ENCODE measurements at regions of chr1 and their contacts with region 1.

Region 1: DNA sequence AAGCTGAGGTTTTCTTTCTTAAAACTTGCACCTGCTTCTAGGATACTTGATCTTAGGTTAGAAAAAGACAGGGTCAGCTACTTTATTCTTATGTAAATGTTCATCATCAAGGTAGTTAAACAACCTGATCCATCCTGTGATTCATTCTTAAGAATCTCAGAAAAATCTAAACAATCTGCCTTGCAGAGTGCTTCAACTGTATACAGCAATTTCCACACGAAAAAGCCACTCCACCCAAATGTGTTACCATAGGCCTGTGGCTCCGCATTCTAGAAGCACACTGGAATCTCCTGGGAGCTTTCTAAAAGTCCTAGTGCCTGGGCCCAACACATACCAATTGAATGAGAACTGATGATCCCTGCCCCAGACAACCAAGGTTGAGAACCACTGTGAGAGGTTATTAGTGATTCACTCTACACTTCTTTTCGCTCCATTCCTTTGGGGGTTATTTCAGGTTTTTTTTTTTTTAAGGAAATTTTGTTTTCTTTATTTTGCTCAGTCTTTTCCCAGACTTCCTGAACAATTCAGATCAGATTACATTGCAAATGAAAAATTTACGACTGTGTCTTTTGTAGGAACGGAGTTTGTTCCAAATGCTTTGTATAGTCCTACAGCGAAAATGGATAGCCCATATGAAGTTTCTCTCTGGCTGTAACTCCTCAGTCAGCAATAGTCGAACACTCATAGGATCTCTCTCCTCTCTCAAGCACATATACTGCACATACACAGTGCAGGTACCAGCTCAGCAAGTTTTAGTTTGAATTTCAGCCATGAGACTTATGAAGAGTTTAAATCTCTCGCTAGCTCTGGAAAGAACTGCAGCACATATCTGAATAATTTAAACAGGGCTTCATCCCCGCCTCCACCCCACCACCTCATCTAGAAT is 16.1 kb downstream of the SMYD2 start:
- DNase-seq: peak; percentile 45 to 94
- H3K4me3 ChIP-seq: no peak overlapping the region
- H3K27ac ChIP-seq: peak overlapping the region; percentile 65
- H3K4me1 ChIP-seq: peaks cover 33% of the 10 kb centered on the region
- H3K27me3 ChIP-seq: no peaks in the 10 kb centered on the region
- CTCF ChIP-seq: no peak

Region 2: GRCh38 chr1:213492161-213493041 is 804.7 kb before region 1 on chr1:
- CTCF ChIA-PET with region 1: interaction called, 14 read pairs
- POLR2A ChIA-PET with region 1: no interaction called
- intact Hi-C with region 1: no loop called
- DNase-seq: no peak
- H3K4me3 ChIP-seq: no peak overlapping the region
- H3K27ac ChIP-seq: no peak overlapping the region
- H3K4me1 ChIP-seq: no peaks in the 10 kb centered on the region
- H3K27me3 ChIP-seq: no peaks in the 10 kb centered on the region
- CTCF ChIP-seq: no peak

Region 3: DNA sequence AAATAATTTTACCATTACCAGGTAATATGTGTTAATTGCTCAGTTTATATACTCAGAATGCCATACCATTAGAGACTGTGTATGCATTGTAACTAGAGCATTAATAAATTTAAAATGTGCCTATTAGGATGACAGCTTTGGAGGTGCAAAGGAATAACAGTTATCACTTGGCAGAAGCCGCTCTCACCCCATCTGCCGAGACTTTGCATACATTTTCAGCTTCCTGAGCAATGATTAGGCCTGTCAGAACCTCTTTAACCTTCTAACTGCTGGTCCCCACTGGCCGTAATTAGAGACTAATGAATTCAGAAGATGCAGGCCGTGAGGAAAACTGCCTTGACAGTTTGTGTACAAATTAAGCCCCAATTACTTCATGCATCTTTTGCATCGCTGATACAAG is 467.3 kb before region 1 on chr1:
- CTCF ChIA-PET with region 1: no interaction called
- POLR2A ChIA-PET with region 1: no interaction called
- intact Hi-C with region 1: no loop called
- DNase-seq: no peak
- H3K4me3 ChIP-seq: no peak overlapping the region
- H3K27ac ChIP-seq: no peak overlapping the region
- H3K4me1 ChIP-seq: no peaks in the 10 kb centered on the region
- H3K27me3 ChIP-seq: no peaks in the 10 kb centered on the region
- CTCF ChIP-seq: no peak

Region 4: GRCh38 chr1:214362188-214362882 is 65.2 kb after region 1 on chr1:
- CTCF ChIA-PET with region 1: no interaction called
- POLR2A ChIA-PET with region 1: no interaction called
- intact Hi-C with region 1: no loop called
- DNase-seq: no peak
- H3K4me3 ChIP-seq: no peak overlapping the region
- H3K27ac ChIP-seq: no peak overlapping the region
- H3K4me1 ChIP-seq: no peaks in the 10 kb centered on the region
- H3K27me3 ChIP-seq: no peaks in the 10 kb centered on the region
- CTCF ChIP-seq: no peak